ENCODE measurements at regions of chr17 and their contacts with region 1.

Region 1: GRCh38 chr17:43576563-43577229 is 30.6 kb upstream of the ETV4 start:
- DNase-seq: peak; percentile 77
- H3K4me3 ChIP-seq: no peak overlapping the region
- H3K27ac ChIP-seq: no peak overlapping the region
- H3K4me1 ChIP-seq: peaks cover 29% of the 10 kb centered on the region
- CTCF ChIP-seq: peak; percentile 94

Region 2: DNA sequence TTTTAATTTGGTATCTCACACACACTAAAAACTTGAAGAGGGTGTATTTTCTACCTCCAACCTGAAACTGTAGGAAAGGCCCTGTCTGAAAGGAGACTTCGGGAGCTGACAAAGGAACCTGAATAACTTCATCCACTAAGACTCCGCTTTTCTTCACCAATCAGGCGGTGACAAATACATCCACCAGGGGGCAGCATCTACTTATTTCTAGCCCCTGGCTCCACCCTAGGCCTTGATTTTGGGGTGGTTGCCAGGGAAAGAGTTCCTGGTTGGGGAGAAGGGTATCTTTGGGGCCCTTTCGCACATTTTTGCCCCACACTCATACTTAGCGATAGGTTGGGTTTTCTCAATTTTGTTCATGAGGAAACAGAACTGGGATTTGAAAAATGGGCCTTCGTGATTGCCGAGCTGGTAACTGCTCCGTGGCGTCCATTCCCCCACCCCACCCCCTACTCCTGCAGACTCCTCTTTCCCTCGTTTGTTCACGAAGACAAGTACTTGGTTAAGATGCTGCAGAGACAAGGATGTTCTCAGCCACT is 182.7 kb before region 1 on chr17:
- CTCF ChIA-PET with region 1: no interaction called
- POLR2A ChIA-PET with region 1: no interaction called
- intact Hi-C with region 1: loop called (anchors 5 kb)
- DNase-seq: peak; percentile 86
- H3K4me3 ChIP-seq: no peak overlapping the region
- H3K27ac ChIP-seq: no peak overlapping the region
- H3K4me1 ChIP-seq: peaks cover 18% of the 10 kb centered on the region
- CTCF ChIP-seq: peak; percentile 94

Region 3: DNA sequence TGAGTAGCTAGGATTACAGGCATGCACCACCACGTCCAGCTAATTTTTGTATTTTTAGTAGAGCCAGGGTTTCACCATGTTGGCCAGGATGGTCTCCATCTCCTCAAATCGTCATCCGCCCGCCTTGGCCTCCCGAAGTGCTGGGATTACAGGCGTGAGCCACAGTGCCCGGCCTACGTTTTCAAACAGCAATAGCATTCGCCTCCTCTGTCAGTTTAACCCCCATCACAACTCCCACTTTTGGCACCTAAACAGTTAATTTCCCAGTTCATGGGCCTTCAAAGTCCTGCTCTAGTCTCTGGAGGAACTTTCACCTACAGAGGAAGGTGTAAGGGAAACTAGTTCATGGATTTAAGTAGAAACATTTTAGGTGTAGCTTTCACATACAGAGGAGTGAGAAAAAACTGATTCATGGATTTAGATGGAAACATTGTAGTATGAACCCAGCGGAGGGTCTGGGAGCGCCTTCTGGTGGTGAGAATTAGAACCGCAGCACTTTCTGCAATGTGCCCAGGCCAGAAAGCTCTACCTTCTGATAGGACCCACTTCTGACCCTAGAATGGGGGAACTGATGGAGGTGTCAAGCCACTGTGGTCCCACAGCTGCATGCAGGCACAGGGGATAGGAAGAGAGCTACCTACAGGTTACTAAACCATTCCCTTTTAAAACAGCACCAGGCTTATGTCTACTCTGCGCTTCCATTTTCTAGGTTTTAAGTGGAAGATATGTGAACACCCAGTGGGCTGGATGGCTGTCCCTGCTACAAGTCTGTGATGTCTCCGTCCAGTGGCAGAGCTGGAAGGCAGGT is 97.0 kb after region 1 on chr17:
- CTCF ChIA-PET with region 1: interaction called, 6 read pairs
- POLR2A ChIA-PET with region 1: no interaction called
- intact Hi-C with region 1: loop called (anchors 1 kb)
- DNase-seq: peak; percentile 65
- H3K4me3 ChIP-seq: no peak overlapping the region
- H3K27ac ChIP-seq: no peak overlapping the region
- H3K4me1 ChIP-seq: peaks cover 14% of the 10 kb centered on the region
- CTCF ChIP-seq: peak; percentile 91

Region 4: GRCh38 chr17:43760254-43760852 is 183.7 kb after region 1 on chr17:
- CTCF ChIA-PET with region 1: interaction called, 3 read pairs
- POLR2A ChIA-PET with region 1: no interaction called
- intact Hi-C with region 1: loop called (anchors 1 kb)
- DNase-seq: peak; percentile 86
- H3K4me3 ChIP-seq: no peak overlapping the region
- H3K27ac ChIP-seq: no peak overlapping the region
- H3K4me1 ChIP-seq: no peaks in the 10 kb centered on the region
- CTCF ChIP-seq: peak; percentile 99